ENCODE measurements at regions of chr4 and their contacts with region 1.

Region 1: GRCh38 chr4:82739316-82740179 is 59.0 kb downstream of the SCD5 start:
- DNase-seq: peak; percentile 87
- ATAC-seq: peak; percentile 100
- H3K4me3 Mint-ChIP-seq: no peak overlapping the region
- H3K27ac Mint-ChIP-seq: no peak overlapping the region
- H3K4me1 Mint-ChIP-seq: no peaks in the 10 kb centered on the region
- H3K27me3 Mint-ChIP-seq: peaks cover 1% of the 10 kb centered on the region
- CTCF ChIP-seq: peak; percentile 100

Region 2: GRCh38 chr4:82322706-82323105 is 416.8 kb before region 1 on chr4:
- CTCF ChIA-PET with region 1: no interaction called
- POLR2A ChIA-PET with region 1: no interaction called
- intact Hi-C with region 1: no loop called
- DNase-seq: no peak
- ATAC-seq: no peak
- H3K4me3 Mint-ChIP-seq: no peak overlapping the region
- H3K27ac Mint-ChIP-seq: no peak overlapping the region
- H3K4me1 Mint-ChIP-seq: peaks cover 4% of the 10 kb centered on the region
- H3K27me3 Mint-ChIP-seq: peaks cover 2% of the 10 kb centered on the region
- CTCF ChIP-seq: no peak

Region 3: DNA sequence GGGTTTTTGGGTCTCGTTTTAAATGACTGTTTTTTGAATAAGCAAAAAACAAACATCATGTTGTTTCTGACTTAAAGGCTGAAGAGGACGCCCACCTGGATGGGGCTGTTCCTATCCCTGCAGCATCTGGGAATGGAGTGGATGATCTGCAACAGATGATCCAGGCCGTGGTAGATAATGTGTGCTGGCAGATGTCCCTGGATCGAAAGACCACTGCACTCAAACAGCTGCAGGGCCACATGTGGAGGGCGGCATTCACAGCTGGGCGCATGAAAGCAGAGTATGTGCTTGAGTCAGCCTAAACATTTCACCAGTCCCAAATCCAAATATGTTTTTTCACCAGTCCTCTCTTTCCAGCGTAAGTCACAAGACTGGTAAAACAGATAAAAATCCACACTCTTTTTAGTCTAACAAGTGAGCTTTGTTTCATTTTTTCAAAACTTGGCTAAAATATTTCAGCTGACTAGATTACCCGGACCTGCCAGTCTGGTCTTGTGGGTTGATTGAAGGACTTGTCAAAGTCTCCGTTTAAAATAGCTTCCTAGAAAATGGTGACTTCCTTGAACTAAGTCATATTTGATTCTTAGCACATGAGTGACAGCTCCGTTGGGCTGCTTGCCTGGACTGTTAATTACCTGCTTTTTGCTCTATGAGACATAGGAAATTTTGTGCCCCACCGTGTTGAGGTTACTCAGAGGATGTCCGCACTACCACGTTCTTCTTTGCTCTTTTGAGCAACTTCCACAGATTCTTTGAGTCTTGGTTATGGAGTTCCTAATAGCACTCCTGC is 288.4 kb before region 1 on chr4:
- CTCF ChIA-PET with region 1: interaction called, 10 read pairs
- POLR2A ChIA-PET with region 1: no interaction called
- intact Hi-C with region 1: no loop called
- DNase-seq: no peak
- ATAC-seq: no peak
- H3K4me3 Mint-ChIP-seq: no peak overlapping the region
- H3K27ac Mint-ChIP-seq: peak overlapping the region; percentile 81
- H3K4me1 Mint-ChIP-seq: peaks cover 29% of the 10 kb centered on the region
- H3K27me3 Mint-ChIP-seq: no peaks in the 10 kb centered on the region
- CTCF ChIP-seq: no peak

Region 4: DNA sequence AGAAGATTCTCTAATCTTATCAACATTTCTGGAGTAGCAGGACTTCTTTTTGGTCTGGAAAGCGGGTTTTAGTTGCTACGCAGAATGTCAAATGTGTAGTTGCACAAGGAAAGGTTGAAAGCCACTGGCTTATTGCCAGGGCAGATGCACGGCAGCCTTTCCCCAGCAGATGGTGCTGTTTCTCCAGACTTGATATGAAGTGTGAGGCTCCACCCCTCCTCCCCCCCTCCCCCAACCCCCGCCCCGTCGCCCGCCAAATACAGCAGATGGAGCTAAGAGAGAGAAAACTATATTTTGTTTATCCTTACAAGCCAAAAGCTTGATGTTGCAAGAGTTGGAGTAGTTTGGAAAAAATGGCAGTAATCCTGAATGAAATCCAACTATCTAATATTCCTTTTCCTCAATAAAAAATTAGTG is 277.1 kb before region 1 on chr4:
- CTCF ChIA-PET with region 1: interaction called, 56 read pairs
- POLR2A ChIA-PET with region 1: no interaction called
- intact Hi-C with region 1: loop called (anchors 5 kb)
- DNase-seq: peak; percentile 94
- ATAC-seq: peak; percentile 98
- H3K4me3 Mint-ChIP-seq: no peak overlapping the region
- H3K27ac Mint-ChIP-seq: no peak overlapping the region
- H3K4me1 Mint-ChIP-seq: peaks cover 8% of the 10 kb centered on the region
- H3K27me3 Mint-ChIP-seq: no peaks in the 10 kb centered on the region
- CTCF ChIP-seq: peak; percentile 80

Region 5: DNA sequence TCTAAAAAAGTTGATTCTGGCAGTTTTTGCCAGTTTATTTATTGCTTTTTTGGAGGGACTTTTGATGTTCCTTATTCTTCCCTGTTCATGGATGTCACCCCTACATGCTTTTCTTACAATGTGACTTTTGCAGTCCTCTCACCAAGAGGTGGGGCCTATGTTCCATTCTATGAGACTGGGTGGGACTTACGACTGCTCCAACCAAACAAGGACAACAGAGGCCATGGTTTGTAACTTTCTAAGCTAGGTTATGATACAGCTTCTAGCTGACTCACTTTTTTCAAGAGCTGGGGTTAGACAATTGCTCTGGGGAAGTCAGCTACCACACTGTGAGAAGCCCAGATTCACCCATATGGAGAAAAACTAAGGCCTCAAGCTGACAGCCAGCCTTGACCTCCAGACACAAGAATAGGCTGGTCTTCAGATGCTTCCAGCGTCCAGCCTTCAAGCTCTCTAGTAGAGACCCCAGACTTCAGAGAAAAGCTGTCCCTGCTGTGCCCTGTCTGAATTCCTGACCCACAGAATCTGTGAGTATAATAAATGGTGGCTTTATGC is 269.7 kb before region 1 on chr4:
- CTCF ChIA-PET with region 1: interaction called, 56 read pairs
- POLR2A ChIA-PET with region 1: no interaction called
- intact Hi-C with region 1: no loop called
- DNase-seq: no peak
- ATAC-seq: peak; percentile 45
- H3K4me3 Mint-ChIP-seq: no peak overlapping the region
- H3K27ac Mint-ChIP-seq: no peak overlapping the region
- H3K4me1 Mint-ChIP-seq: no peaks in the 10 kb centered on the region
- H3K27me3 Mint-ChIP-seq: no peaks in the 10 kb centered on the region
- CTCF ChIP-seq: no peak

Region 6: DNA sequence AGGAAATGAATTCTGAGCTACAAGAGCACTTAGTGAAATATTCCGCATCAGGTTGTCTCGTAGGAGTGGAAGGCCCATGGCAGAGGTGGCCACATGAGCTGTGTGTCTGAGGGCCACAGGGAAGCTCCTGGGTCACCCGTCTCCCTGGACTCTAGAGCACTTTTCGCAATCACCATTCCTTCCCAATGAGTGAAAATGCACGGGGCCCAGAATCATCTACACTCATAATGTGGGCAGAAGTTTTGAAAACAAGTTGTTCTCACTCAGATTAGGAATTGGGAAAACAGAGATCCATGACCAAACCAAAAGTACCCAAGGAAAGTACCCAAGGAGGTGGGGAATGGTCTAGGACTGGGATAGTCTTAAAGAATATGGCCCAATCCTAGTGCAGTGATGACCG is 35.4 kb before region 1 on chr4:
- CTCF ChIA-PET with region 1: interaction called, 11 read pairs
- POLR2A ChIA-PET with region 1: no interaction called
- intact Hi-C with region 1: no loop called
- DNase-seq: no peak
- ATAC-seq: no peak
- H3K4me3 Mint-ChIP-seq: no peak overlapping the region
- H3K27ac Mint-ChIP-seq: no peak overlapping the region
- H3K4me1 Mint-ChIP-seq: no peaks in the 10 kb centered on the region
- H3K27me3 Mint-ChIP-seq: no peaks in the 10 kb centered on the region
- CTCF ChIP-seq: no peak

Region 7: DNA sequence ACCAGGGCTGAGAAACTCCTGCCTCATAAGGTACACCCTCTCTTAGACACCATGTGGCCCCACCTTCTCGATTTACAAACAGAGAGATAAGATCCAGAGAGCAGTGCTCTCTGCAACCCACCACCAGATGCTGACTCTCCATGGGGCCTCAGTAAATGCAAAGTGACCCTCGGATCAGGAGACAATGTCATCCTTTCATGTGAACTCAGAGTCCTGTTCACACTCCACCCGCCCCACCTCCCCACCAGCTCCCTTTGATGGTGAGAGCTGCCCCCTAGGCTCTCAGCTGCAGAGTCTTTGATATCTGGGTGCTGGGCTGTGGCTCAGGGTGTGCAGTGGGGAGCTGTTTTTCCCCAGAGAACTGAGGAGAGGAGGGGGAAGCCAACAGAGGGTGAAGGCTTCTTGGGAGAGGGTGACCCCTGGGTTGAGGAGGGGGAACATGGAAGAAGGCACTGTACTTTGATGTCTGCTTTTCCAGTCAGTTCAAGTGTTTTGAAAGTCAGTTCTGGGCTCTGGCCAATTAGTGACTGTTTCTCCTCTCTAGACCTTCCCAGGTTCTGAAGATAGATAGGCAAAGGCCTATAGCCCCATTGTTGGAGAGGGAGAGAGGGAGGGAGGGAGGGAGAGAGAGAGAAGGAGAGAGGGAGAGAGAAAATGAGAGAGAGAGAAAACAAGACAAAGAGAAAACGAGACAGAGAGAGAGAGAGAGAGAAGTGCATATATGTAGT is 29.2 kb before region 1 on chr4:
- CTCF ChIA-PET with region 1: interaction called, 12 read pairs
- POLR2A ChIA-PET with region 1: no interaction called
- intact Hi-C with region 1: no loop called
- DNase-seq: no peak
- ATAC-seq: no peak
- H3K4me3 Mint-ChIP-seq: no peak overlapping the region
- H3K27ac Mint-ChIP-seq: no peak overlapping the region
- H3K4me1 Mint-ChIP-seq: no peaks in the 10 kb centered on the region
- H3K27me3 Mint-ChIP-seq: no peaks in the 10 kb centered on the region
- CTCF ChIP-seq: no peak

Region 8: GRCh38 chr4:82721819-82722423 is 17.6 kb before region 1 on chr4:
- CTCF ChIA-PET with region 1: interaction called, 81 read pairs
- POLR2A ChIA-PET with region 1: no interaction called
- intact Hi-C with region 1: no loop called
- DNase-seq: peak; percentile 48
- ATAC-seq: peak; percentile 75
- H3K4me3 Mint-ChIP-seq: no peak overlapping the region
- H3K27ac Mint-ChIP-seq: no peak overlapping the region
- H3K4me1 Mint-ChIP-seq: no peaks in the 10 kb centered on the region
- H3K27me3 Mint-ChIP-seq: no peaks in the 10 kb centered on the region
- CTCF ChIP-seq: peak; percentile 49